AG04450 (cell line): ENCODE measurements at regions of chr5 and their contacts with region 1.

Region 1: DNA sequence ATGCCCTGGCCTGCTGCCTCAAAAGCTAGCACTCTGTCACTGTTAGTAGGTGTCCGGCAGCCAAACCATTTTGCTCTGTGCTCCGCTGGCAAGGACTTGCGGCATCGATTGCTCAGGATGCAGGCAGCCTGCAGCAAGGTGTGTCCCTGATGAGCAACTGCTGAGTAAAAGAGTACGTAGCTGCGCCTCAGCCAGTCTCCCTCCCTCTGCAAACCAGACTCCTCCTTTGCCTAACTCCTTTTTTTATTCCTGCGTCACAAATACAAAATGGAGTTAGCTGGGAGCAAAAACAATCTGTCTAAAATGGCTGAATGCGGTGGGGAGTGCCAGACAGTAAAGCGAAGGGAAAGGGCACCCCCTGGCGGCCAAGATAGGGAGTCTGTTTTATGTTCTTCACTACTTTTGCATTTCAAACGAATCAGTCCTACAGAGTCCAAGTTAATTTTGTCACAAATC is 61.1 kb downstream of the DIAPH1 start:
- DNase-seq: peak; percentile 97
- H3K4me3 ChIP-seq: peak overlapping the region; percentile 25; the same call in 1 of the 2 replicates
- H3K27ac ChIP-seq: peak overlapping the region; percentile 84
- H3K27me3 ChIP-seq: no peaks in the 10 kb centered on the region
- CTCF ChIP-seq: peak; percentile 84

Region 2: GRCh38 chr5:140718241-140718580 is 839.5 kb before region 1 on chr5:
- CTCF ChIA-PET with region 1: no interaction called
- POLR2A ChIA-PET with region 1: no interaction called
- DNase-seq: no peak
- H3K4me3 ChIP-seq: no peak overlapping the region
- H3K27ac ChIP-seq: peak overlapping the region; percentile 11
- H3K27me3 ChIP-seq: no peaks in the 10 kb centered on the region
- CTCF ChIP-seq: no peak

Region 3: DNA sequence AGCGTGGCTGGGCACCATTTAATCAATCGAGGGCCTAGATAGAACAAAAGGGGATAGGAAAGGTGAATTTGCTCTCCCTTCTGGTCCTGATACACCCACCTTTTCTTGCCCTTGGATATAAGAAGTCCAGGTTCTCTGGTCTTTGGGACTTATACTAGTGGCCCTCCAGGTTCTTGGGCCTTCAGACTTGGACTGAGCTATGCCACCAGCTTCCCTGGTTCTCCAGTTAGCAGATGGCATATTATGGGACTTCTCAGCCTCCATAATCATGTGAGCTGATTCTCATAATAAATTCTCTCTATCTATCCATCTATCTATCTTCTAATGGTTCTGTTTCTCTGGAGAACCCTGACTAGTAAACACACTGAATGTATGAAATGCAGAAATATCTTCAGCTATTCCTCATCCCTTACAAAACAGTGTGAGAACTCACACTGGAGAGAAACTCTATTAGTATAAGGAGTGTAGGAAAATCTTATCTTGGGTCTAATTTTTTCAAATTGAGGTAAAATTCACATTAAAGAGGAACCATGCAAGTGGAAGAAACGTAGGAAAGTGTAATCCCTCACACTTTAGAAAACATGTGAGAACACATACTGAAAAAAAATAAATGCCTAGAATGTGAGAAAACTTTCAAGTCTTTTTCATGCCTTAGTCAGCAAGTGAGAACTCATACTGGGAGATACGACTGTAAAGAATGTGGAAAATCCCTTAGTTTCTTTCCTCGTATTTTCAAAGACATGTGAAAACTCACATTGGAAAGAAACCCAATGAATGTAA is 297.1 kb before region 1 on chr5:
- CTCF ChIA-PET with region 1: no interaction called
- POLR2A ChIA-PET with region 1: no interaction called
- DNase-seq: no peak
- H3K4me3 ChIP-seq: no peak overlapping the region
- H3K27ac ChIP-seq: no peak overlapping the region
- H3K27me3 ChIP-seq: no peaks in the 10 kb centered on the region
- CTCF ChIP-seq: no peak

Region 4: GRCh38 chr5:141326088-141326854 is 231.4 kb before region 1 on chr5:
- CTCF ChIA-PET with region 1: interaction called, 133 read pairs
- POLR2A ChIA-PET with region 1: no interaction called
- DNase-seq: peak; percentile 49
- H3K4me3 ChIP-seq: peak overlapping the region; percentile 62
- H3K27ac ChIP-seq: peak overlapping the region; percentile 71
- H3K27me3 ChIP-seq: peaks cover 7% of the 10 kb centered on the region
- CTCF ChIP-seq: peak; percentile 74

Region 5: DNA sequence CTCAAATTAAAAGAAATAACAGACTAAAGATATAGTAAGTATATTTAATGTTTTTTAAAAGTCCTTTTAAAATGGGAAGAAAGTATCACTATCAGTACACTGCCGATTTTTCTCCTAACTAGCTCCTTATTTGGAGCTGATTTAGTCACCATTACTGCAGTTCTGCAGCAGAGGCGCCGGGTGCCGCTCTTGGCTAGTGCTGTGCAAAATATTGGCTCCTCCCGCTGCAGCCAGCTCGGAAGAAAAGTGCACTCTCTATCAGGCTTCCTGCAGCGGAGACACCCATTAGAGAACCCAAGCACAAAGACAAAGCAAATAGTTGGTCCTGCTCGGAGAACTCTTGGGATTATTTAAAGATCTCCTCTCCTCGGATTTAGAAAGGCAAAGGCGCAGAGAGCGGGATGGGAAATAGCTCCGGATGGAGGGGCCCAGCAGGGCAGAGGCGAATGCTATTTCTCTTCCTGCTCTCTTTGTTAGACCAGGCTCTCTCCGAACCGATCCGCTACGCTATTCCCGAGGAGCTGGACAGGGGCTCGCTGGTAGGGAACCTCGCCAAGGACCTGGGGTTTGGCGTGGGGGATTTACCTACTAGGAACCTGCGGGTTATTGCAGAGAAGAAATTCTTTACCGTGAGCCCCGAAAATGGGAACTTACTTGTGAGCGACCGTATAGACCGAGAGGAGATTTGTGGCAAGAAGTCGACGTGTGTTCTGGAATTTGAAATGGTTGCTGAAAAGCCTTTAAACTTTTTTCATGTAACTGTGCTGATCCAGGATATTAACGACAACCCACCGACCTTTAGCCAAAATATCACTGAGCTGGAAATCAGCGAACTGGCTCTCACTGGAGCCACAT is 187.5 kb before region 1 on chr5 and contains the start of gene PCDHGB3:
- CTCF ChIA-PET with region 1: interaction called, 105 read pairs
- POLR2A ChIA-PET with region 1: no interaction called
- DNase-seq: no peak
- H3K4me3 ChIP-seq: peak within 1 kb of the TSS; percentile 47
- H3K27ac ChIP-seq: no peak within 1 kb of the TSS
- H3K27me3 ChIP-seq: peaks cover 16% of the 10 kb centered on the region
- CTCF ChIP-seq: peak; percentile 48
- polyA plus RNA-seq, gene PCDHGB3: 3.6 and 4.3 TPM in 2 replicates

Region 6: DNA sequence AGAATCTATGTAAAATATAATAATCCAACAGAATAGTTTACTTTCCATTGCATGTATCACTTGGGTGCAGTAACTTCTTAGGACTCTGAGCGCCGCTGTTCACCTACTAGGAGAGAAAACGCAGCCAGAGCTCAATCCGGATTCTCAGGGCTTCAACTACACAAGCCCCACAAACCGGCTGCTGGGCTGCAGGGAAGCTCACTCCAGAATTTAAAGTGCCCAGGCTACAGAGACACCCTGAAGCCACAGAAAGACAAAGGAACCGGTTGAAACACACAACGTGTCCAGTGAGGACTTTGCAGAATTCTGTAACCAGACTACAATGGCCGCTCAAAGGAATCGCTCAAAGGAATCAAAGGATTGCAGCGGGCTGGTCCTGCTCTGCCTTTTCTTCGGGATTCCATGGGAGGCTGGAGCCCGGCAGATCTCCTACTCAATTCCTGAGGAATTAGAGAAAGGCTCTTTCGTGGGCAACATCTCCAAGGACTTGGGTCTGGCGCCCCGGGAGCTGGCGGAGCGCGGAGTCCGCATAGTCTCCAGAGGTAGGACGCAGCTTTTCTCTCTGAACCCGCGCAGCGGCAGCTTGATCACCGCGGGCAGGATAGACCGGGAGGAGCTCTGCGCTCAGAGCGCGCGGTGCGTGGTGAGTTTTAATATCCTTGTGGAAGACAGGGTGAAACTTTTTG is 144.7 kb before region 1 on chr5 and contains the start of gene PCDHGA10:
- CTCF ChIA-PET with region 1: interaction called, 178 read pairs
- POLR2A ChIA-PET with region 1: interaction called, 4 read pairs
- DNase-seq: no peak
- H3K4me3 ChIP-seq: peak within 1 kb of the TSS; percentile 58
- H3K27ac ChIP-seq: peak within 1 kb of the TSS; percentile 52
- H3K27me3 ChIP-seq: no peaks in the 10 kb centered on the region
- CTCF ChIP-seq: peak; percentile 77
- polyA plus RNA-seq, gene PCDHGA10: 9.2 and 11.7 TPM in 2 replicates

Region 7: GRCh38 chr5:141465351-141465750 is 92.4 kb before region 1 on chr5:
- CTCF ChIA-PET with region 1: interaction called, 10 read pairs
- POLR2A ChIA-PET with region 1: no interaction called
- DNase-seq: no peak
- H3K4me3 ChIP-seq: no peak overlapping the region
- H3K27ac ChIP-seq: no peak overlapping the region
- H3K27me3 ChIP-seq: no peaks in the 10 kb centered on the region
- CTCF ChIP-seq: no peak

Region 8: GRCh38 chr5:141517880-141518617 is 39.7 kb before region 1 on chr5:
- CTCF ChIA-PET with region 1: interaction called, 95 read pairs
- POLR2A ChIA-PET with region 1: interaction called, 8 read pairs
- DNase-seq: peak; percentile 69
- H3K4me3 ChIP-seq: no peak overlapping the region
- H3K27ac ChIP-seq: peak overlapping the region; percentile 81
- H3K27me3 ChIP-seq: no peaks in the 10 kb centered on the region
- CTCF ChIP-seq: no peak

Region 9: GRCh38 chr5:141650851-141651727 is 93.4 kb after region 1 on chr5 and contains the start of gene FCHSD1:
- CTCF ChIA-PET with region 1: no interaction called
- POLR2A ChIA-PET with region 1: no interaction called
- DNase-seq: peak; percentile 50
- H3K4me3 ChIP-seq: peak within 1 kb of the TSS; percentile 85
- H3K27ac ChIP-seq: no peak within 1 kb of the TSS
- H3K27me3 ChIP-seq: no peaks in the 10 kb centered on the region
- CTCF ChIP-seq: no peak
- polyA plus RNA-seq, gene FCHSD1: 28.1 and 30.2 TPM in 2 replicates